Brain microvascular endothelial cell (primary cell): ENCODE measurements at regions of chr14 and their contacts with region 1.

Region 1: DNA sequence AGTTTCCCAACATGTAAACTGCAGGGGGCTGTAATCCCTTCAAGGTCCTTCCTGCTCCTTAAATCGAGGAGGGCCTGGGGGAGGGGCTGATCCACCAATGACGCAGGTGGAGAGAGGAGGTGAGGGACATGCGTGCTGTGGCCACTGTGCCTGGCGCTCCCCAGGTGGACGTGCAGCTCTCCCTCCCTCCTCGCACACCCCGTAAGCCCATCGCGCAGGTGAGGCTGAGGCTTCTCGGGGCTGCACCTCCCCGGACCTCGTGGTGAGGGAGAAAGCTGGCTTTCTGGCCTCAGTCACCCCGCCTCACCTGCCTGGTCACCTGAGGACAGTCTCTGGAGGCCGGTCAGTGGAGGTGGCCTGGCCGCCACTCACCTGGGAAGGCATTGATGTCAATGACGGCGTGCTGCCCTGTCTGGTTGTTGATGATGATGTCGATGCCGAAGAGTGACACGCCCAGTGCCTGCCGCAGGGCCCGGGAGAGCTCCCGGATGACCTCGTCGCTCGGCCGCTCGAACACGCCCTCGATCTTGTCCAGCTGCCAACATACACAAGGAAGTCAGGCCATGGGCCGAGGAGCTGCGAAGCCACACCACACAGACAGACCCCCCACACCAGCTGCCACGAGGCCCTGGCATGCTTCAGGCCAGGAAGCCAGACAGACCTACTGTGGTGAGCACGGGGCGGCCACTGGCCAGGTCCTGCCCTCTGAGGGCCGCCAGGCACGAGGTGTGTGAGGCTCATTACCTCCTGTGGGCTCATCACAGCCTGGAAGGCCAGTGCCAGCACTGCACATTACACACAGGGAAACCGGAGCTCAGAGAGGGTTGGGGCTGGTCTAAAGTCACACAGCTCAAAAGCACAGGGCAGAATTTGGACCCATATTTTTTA is 23.3 kb downstream of the CHGA start:
- DNase-seq: peak; percentile 57
- H3K4me3 ChIP-seq: no peak overlapping the region
- H3K27ac ChIP-seq: no peak overlapping the region
- H3K27me3 ChIP-seq: no peaks in the 10 kb centered on the region
- CTCF ChIP-seq: no peak

Region 2: DNA sequence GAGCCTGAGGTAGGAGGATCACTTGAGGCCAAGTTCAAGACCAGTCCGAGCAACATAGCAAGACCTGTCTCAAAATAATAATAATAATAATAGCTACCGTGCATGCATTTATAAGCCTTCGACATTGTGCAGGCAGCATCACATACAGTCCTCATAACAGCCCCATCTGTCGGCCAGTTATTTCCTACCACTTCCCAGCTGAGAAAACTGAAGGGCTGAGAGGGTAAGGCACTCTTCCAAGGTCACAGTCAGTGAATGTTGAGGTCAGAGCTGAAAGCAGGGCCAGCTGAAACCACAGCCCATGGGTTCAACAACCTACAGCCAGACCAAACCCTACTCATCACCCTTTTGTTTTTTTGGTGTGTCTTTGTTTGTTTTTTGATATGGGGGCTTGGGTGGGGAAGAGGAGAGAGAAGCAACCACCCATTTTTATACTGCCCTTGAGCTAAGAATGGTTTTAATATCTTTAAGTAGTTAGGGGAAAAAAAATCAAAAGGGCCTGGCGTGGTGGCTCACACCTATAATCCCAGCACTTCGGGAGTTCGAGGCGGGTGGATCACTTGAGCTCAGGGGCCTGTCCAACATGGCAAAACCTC is 186.4 kb after region 1 on chr14:
- in situ Hi-C with region 1: loop called (anchors 25 kb)
- DNase-seq: peak; percentile 54
- H3K4me3 ChIP-seq: no peak overlapping the region
- H3K27ac ChIP-seq: no peak overlapping the region
- H3K27me3 ChIP-seq: no peaks in the 10 kb centered on the region
- CTCF ChIP-seq: peak; percentile 79